ENCODE measurements at regions of chr4 and their contacts with region 1.

Region 1: DNA sequence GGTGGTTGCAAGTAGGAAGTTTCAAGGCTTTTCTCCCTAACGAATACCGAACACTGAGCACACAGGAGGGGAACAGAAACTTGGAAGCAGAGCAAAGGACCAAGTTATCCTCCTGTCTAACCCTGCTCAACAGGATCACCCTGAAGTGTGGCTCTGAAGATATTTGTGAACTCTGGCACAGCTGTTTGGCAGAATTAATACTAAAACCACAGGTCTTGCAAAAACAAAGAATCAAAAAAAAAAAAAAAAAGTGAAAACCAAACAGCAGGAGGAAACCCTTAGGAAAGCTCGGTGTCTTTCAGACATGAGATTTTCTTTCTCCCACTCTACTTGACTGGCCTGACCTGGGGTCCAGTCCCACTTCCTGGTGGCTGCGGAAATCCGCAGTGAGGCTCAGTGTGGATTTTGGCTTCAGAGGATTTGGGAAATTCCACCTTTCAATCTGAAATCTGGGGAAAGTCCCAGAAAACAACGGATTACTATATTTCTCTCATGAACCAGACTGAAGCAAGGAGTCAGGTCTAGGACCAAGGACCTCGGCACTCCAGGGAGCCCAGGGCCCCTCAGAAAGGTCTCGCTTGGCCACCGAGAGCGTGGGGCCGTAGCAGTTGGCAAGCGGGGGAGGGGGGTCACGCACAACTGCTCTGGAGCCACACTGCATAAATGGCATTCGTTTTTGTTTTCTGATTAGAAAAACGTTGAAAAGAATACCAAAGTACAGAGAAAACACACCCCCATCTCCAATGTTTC is 867 bp downstream of the TIFA start:
- DNase-seq: peak in 3 of 14 experiments; percentile 38 to 80 (median 74)
- ATAC-seq: no peak
- H3K4me3 ChIP-seq: peak overlapping the region; percentile 78
- H3K4me3 Mint-ChIP-seq: peak overlapping the region; percentile 96
- H3K27ac ChIP-seq: peak overlapping the region; percentile 58 to 86
- H3K27ac Mint-ChIP-seq: peak overlapping the region; percentile 87
- H3K4me1 ChIP-seq: peaks cover 49% of the 10 kb centered on the region
- H3K4me1 Mint-ChIP-seq: peaks cover 88% of the 10 kb centered on the region
- H3K27me3 ChIP-seq: no peaks in the 10 kb centered on the region
- H3K27me3 Mint-ChIP-seq: no peaks in the 10 kb centered on the region
- CTCF ChIP-seq: no peak

Region 2: GRCh38 chr4:112145326-112145819 is 139.5 kb before region 1 on chr4 and contains the start of gene FAM241A:
- CTCF ChIA-PET with region 1: no interaction called
- POLR2A ChIA-PET with region 1: no interaction called
- intact Hi-C with region 1: loop called in 1 of 2 experiments (anchors 5 kb)
- DNase-seq: peak; percentile 79 to 93 (median 90)
- ATAC-seq: peak; percentile 94
- H3K4me3 ChIP-seq: peak within 1 kb of the TSS; percentile 70
- H3K4me3 Mint-ChIP-seq: peak within 1 kb of the TSS; percentile 93
- H3K27ac ChIP-seq: peak within 1 kb of the TSS; percentile 27 to 73
- H3K27ac Mint-ChIP-seq: peak within 1 kb of the TSS; percentile 85
- H3K4me1 ChIP-seq: peaks cover 6% of the 10 kb centered on the region
- H3K4me1 Mint-ChIP-seq: peaks cover 35% of the 10 kb centered on the region
- H3K27me3 ChIP-seq: no peaks in the 10 kb centered on the region
- H3K27me3 Mint-ChIP-seq: no peaks in the 10 kb centered on the region
- CTCF ChIP-seq: no peak
- total RNA-seq, gene FAM241A: 0.74 to 1.1 TPM

Region 3: DNA sequence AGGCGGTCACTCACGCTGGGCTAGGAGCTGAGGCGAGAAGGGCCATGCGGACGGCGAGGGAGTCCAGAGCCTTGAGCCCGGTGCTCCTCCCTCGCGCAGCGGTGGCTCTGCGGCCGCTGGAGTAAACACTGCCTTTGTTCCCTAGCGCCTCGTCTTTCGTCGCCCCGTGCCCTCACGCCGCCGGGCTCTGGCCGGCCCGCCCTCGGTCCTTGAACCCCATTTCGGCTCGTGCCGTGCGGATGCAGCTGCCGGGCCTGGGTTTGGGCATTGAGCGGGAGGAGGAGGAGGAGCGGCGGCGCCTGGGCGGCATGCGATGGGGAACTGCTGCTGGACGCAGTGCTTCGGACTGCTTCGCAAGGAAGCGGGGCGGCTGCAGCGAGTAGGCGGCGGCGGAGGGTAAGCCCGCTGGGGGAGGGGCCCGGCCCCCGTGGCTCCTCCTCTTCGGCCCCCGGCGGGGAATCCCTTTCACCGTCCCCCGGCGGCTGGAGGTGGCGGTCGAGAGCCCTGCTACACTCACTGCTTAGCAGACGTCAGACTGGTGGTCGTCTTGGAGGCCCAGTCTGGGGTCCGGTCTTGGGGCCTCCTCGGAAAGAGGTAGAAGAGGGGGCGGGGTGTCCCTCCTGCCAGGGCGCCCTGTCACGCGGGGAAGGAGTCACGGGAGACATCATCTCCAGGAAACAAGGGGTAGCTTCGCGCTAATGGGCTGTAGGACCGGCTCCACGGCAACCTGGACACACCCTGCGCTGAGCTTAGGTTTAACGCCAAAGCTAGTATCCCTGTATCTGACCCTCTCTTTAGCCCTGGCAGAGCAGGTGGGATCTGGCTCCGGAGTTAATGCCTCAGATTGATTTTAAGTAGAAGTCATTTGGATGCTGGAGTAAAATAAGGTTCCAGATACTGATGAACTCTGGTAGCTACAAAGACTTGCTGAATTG is 52.8 kb before region 1 on chr4 and contains the start of gene AP1AR:
- CTCF ChIA-PET with region 1: interaction called, 3 read pairs
- POLR2A ChIA-PET with region 1: interaction called, 22 read pairs
- intact Hi-C with region 1: loop called (anchors 2 to 5 kb)
- DNase-seq: peak; percentile 53 to 90 (median 69)
- ATAC-seq: peak; percentile 50
- H3K4me3 ChIP-seq: peak within 1 kb of the TSS; percentile 93
- H3K4me3 Mint-ChIP-seq: peak within 1 kb of the TSS; percentile 99
- H3K27ac ChIP-seq: peak within 1 kb of the TSS; percentile 93 to 96
- H3K27ac Mint-ChIP-seq: peak within 1 kb of the TSS; percentile 98
- H3K4me1 ChIP-seq: peaks cover 13% of the 10 kb centered on the region
- H3K4me1 Mint-ChIP-seq: peaks cover 55% of the 10 kb centered on the region
- H3K27me3 ChIP-seq: no peaks in the 10 kb centered on the region
- H3K27me3 Mint-ChIP-seq: no peaks in the 10 kb centered on the region
- CTCF ChIP-seq: no peak
- total RNA-seq, gene AP1AR: 3.7 to 4.8 TPM

Region 4: GRCh38 chr4:112296949-112297880 is 12.4 kb after region 1 on chr4 and contains the start of gene ALPK1:
- CTCF ChIA-PET with region 1: interaction called, 4 read pairs
- POLR2A ChIA-PET with region 1: interaction called, 137 read pairs
- intact Hi-C with region 1: no loop called
- DNase-seq: peak in 3 of 14 experiments; percentile 63 to 80 (median 74)
- ATAC-seq: peak; percentile 95
- H3K4me3 ChIP-seq: peak within 1 kb of the TSS; percentile 38
- H3K4me3 Mint-ChIP-seq: peak within 1 kb of the TSS; percentile 87
- H3K27ac ChIP-seq: peak within 1 kb of the TSS; percentile 12 to 30
- H3K27ac Mint-ChIP-seq: peak within 1 kb of the TSS; percentile 87
- H3K4me1 ChIP-seq: peaks cover 17% of the 10 kb centered on the region
- H3K4me1 Mint-ChIP-seq: peaks cover 30% of the 10 kb centered on the region
- H3K27me3 ChIP-seq: no peaks in the 10 kb centered on the region
- H3K27me3 Mint-ChIP-seq: no peaks in the 10 kb centered on the region
- CTCF ChIP-seq: no peak
- total RNA-seq, gene ALPK1: 8.2 to 9.5 TPM

Region 5: DNA sequence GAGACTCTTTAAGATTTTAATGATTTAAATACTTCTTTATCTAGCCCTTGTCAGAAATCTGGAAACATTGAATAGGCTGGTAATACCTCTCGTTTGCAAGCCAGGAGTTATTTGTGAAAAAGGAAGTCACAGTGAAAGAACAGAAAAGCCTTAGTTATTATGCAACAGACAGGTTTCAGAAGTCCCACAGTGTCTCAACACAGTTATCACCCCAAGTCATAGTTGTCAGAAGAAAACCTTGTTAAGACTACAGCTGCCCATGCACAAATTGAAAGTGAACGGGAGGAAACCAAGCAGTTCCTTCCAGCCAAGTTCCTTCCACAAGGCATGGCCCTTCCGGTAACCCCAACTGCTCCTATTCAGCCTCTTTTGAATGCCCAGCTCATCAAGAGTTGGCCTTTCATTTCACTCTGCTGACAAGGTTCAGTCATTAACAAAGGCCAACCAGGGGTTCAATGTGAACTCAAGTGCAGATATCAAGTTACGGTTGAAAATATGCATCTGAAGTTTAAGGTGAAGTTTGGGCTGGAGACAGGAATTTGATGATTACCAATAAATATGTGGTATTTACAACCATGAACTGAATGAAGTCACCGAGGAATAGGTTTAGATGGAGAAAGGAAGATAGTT is 27.9 kb after region 1 on chr4:
- CTCF ChIA-PET with region 1: no interaction called
- POLR2A ChIA-PET with region 1: interaction called, 40 read pairs
- intact Hi-C with region 1: no loop called
- DNase-seq: peak in 2 of 14 experiments; percentile 37 to 38
- ATAC-seq: no peak
- H3K4me3 ChIP-seq: no peak overlapping the region
- H3K4me3 Mint-ChIP-seq: no peak overlapping the region
- H3K27ac ChIP-seq: no peak overlapping the region
- H3K27ac Mint-ChIP-seq: no peak overlapping the region
- H3K4me1 ChIP-seq: peaks cover 10% of the 10 kb centered on the region
- H3K4me1 Mint-ChIP-seq: peaks cover 26% of the 10 kb centered on the region
- H3K27me3 ChIP-seq: no peaks in the 10 kb centered on the region
- H3K27me3 Mint-ChIP-seq: no peaks in the 10 kb centered on the region
- CTCF ChIP-seq: no peak

Region 6: GRCh38 chr4:112321776-112322684 is 37.2 kb after region 1 on chr4:
- CTCF ChIA-PET with region 1: no interaction called
- POLR2A ChIA-PET with region 1: interaction called, 6 read pairs
- intact Hi-C with region 1: loop called (anchors 1 to 2 kb)
- DNase-seq: peak; percentile 60 to 89 (median 76)
- ATAC-seq: peak; percentile 99
- H3K4me3 ChIP-seq: no peak overlapping the region
- H3K4me3 Mint-ChIP-seq: peak overlapping the region; percentile 58
- H3K27ac ChIP-seq: no peak overlapping the region
- H3K27ac Mint-ChIP-seq: no peak overlapping the region
- H3K4me1 ChIP-seq: no peaks in the 10 kb centered on the region
- H3K4me1 Mint-ChIP-seq: peaks cover 14% of the 10 kb centered on the region
- H3K27me3 ChIP-seq: no peaks in the 10 kb centered on the region
- H3K27me3 Mint-ChIP-seq: no peaks in the 10 kb centered on the region
- CTCF ChIP-seq: peak; percentile 98

Region 7: GRCh38 chr4:113761620-113762185 is 1476.9 kb after region 1 on chr4 and contains the start of gene CAMK2D:
- CTCF ChIA-PET with region 1: no interaction called
- POLR2A ChIA-PET with region 1: no interaction called
- intact Hi-C with region 1: loop called in 1 of 2 experiments (anchors 10 kb)
- DNase-seq: peak; percentile 65 to 95 (median 79)
- ATAC-seq: peak; percentile 65
- H3K4me3 ChIP-seq: peak within 1 kb of the TSS; percentile 87
- H3K4me3 Mint-ChIP-seq: peak within 1 kb of the TSS; percentile 95
- H3K27ac ChIP-seq: peak within 1 kb of the TSS; percentile 94 to 96
- H3K27ac Mint-ChIP-seq: peak within 1 kb of the TSS; percentile 95
- H3K4me1 ChIP-seq: peaks cover 7% of the 10 kb centered on the region
- H3K4me1 Mint-ChIP-seq: peaks cover 37% of the 10 kb centered on the region
- H3K27me3 ChIP-seq: no peaks in the 10 kb centered on the region
- H3K27me3 Mint-ChIP-seq: no peaks in the 10 kb centered on the region
- CTCF ChIP-seq: peak; percentile 37
- total RNA-seq, gene CAMK2D: 29.9 to 32.9 TPM

Measured in CD4-positive, alpha-beta T cell (primary cell).